ENCODE measurements at regions of chr11 and their contacts with region 1.

Region 1: GRCh38 chr11:10735481-10736475 is 15.3 kb upstream of the CTR9 start:
- H3K4me3 Mint-ChIP-seq: no peak overlapping the region
- H3K27ac Mint-ChIP-seq: peak overlapping the region; percentile 19
- H3K4me1 Mint-ChIP-seq: peaks cover 16% of the 10 kb centered on the region
- H3K27me3 Mint-ChIP-seq: peaks cover 25% of the 10 kb centered on the region

Region 2: GRCh38 chr11:10405855-10406592 is 329.8 kb before region 1 on chr11:
- intact Hi-C with region 1: loop called (anchors 1 kb)
- H3K4me3 Mint-ChIP-seq: no peak overlapping the region
- H3K27ac Mint-ChIP-seq: no peak overlapping the region
- H3K4me1 Mint-ChIP-seq: peaks cover 55% of the 10 kb centered on the region
- H3K27me3 Mint-ChIP-seq: peaks cover 4% of the 10 kb centered on the region

Region 3: GRCh38 chr11:10514210-10514609 is 221.6 kb before region 1 on chr11:
- intact Hi-C with region 1: loop called (anchors 2 kb)
- H3K4me3 Mint-ChIP-seq: no peak overlapping the region
- H3K27ac Mint-ChIP-seq: no peak overlapping the region
- H3K4me1 Mint-ChIP-seq: no peaks in the 10 kb centered on the region
- H3K27me3 Mint-ChIP-seq: no peaks in the 10 kb centered on the region

Region 4: GRCh38 chr11:10693509-10694081 is 42.2 kb before region 1 on chr11 and contains the start of gene IRAG1:
- intact Hi-C with region 1: no loop called
- H3K4me3 Mint-ChIP-seq: no peak within 1 kb of the TSS
- H3K27ac Mint-ChIP-seq: no peak within 1 kb of the TSS
- H3K4me1 Mint-ChIP-seq: peaks cover 8% of the 10 kb centered on the region
- H3K27me3 Mint-ChIP-seq: peaks cover 45% of the 10 kb centered on the region

Region 5: GRCh38 chr11:10750838-10751580 is 15.2 kb after region 1 on chr11 and contains the start of gene CTR9:
- intact Hi-C with region 1: no loop called
- H3K4me3 Mint-ChIP-seq: peak within 1 kb of the TSS; percentile 95
- H3K27ac Mint-ChIP-seq: peak within 1 kb of the TSS; percentile 97
- H3K4me1 Mint-ChIP-seq: peaks cover 11% of the 10 kb centered on the region
- H3K27me3 Mint-ChIP-seq: no peaks in the 10 kb centered on the region